Activated CD4-positive, alpha-beta T cell treated with anti-CD3 and anti-CD28 coated beads, Interleukin-2, amount 10 ng/mL, durations not matched to agents 24 days and 14 days (primary cell): ENCODE measurements at regions of chr1 and their contacts with region 1.

Region 1: GRCh38 chr1:59025898-59026426 is 242.1 kb upstream of the JUN start:
- DNase-seq: no peak
- H3K4me3 Mint-ChIP-seq: peak overlapping the region; percentile 75
- H3K27ac Mint-ChIP-seq: no peak overlapping the region
- H3K4me1 Mint-ChIP-seq: peaks cover 35% of the 10 kb centered on the region
- H3K27me3 Mint-ChIP-seq: no peaks in the 10 kb centered on the region

Region 2: GRCh38 chr1:58922302-58923089 is 103.5 kb before region 1 on chr1:
- intact Hi-C with region 1: loop called (anchors 5 kb)
- DNase-seq: peak; percentile 87
- H3K4me3 Mint-ChIP-seq: peak overlapping the region; percentile 23
- H3K27ac Mint-ChIP-seq: peak overlapping the region; percentile 70
- H3K4me1 Mint-ChIP-seq: peaks cover 29% of the 10 kb centered on the region
- H3K27me3 Mint-ChIP-seq: peaks cover under 1% of the 10 kb centered on the region

Region 3: GRCh38 chr1:59040486-59040885 is 14.5 kb after region 1 on chr1:
- intact Hi-C with region 1: loop called (anchors 1 kb)
- DNase-seq: no peak
- H3K4me3 Mint-ChIP-seq: no peak overlapping the region
- H3K27ac Mint-ChIP-seq: peak overlapping the region; percentile 21
- H3K4me1 Mint-ChIP-seq: peaks cover 30% of the 10 kb centered on the region
- H3K27me3 Mint-ChIP-seq: no peaks in the 10 kb centered on the region

Region 4: GRCh38 chr1:59046730-59047157 is 20.8 kb after region 1 on chr1:
- intact Hi-C with region 1: loop called (anchors 1 kb)
- DNase-seq: peak; percentile 89
- H3K4me3 Mint-ChIP-seq: peak overlapping the region; percentile 76
- H3K27ac Mint-ChIP-seq: peak overlapping the region; percentile 96
- H3K4me1 Mint-ChIP-seq: peaks cover 60% of the 10 kb centered on the region
- H3K27me3 Mint-ChIP-seq: no peaks in the 10 kb centered on the region

Region 5: GRCh38 chr1:59057211-59057694 is 31.3 kb after region 1 on chr1:
- intact Hi-C with region 1: no loop called
- DNase-seq: no peak
- H3K4me3 Mint-ChIP-seq: no peak overlapping the region
- H3K27ac Mint-ChIP-seq: no peak overlapping the region
- H3K4me1 Mint-ChIP-seq: peaks cover 18% of the 10 kb centered on the region
- H3K27me3 Mint-ChIP-seq: no peaks in the 10 kb centered on the region

Region 6: GRCh38 chr1:59083946-59084865 is 58.2 kb after region 1 on chr1:
- intact Hi-C with region 1: no loop called
- DNase-seq: no peak
- H3K4me3 Mint-ChIP-seq: no peak overlapping the region
- H3K27ac Mint-ChIP-seq: peak overlapping the region; percentile 39
- H3K4me1 Mint-ChIP-seq: peaks cover 22% of the 10 kb centered on the region
- H3K27me3 Mint-ChIP-seq: no peaks in the 10 kb centered on the region

Region 7: DNA sequence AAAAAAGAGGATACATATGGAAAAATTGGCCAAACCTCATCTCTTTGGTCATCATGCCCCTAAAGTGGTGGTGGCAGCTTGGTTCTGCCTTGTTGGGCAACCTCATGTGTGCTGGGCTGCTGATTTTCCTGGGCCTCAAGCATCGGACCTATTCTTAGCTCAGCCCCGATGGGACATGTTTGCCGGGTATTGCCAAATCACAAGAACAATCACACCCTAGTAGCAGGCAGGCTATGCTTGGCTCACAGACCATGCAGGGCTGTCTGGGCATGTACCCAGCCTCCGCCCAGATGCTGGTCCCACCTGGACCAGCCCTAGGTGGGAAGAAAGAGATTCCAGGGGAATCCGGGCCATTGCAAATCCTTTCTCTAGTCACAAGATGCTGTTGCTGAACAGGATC is 81.6 kb after region 1 on chr1:
- intact Hi-C with region 1: no loop called
- DNase-seq: no peak
- H3K4me3 Mint-ChIP-seq: no peak overlapping the region
- H3K27ac Mint-ChIP-seq: no peak overlapping the region
- H3K4me1 Mint-ChIP-seq: no peaks in the 10 kb centered on the region
- H3K27me3 Mint-ChIP-seq: no peaks in the 10 kb centered on the region

Region 8: DNA sequence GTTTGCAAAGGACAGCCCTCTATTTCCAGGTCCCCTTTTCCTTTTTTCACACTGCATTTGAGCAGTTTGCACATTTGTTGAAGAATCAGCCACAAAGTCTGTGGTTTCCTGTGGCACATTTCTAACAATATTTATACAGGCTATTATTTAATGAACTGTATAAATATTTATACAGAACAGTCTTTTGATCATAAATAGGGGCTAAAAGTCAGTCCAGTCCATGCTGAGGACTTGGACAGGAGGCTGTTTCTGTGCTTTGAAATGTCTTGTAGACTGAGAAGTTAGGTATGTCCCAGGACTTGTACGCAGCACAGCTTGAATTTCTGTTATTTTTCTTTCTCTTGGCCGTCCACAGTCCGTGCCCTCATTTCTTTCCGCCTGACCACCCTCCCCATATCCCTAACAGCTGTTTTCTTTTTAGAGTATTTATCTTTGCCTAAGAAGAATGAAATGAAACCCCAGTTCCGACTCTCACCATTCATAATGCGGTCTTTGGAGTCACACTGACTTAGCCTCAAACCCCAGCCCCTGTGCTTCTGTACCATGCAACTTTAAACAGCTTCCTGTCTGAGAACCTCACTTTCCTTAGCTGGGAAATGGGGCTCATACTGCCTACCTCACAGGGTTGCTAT is 290.7 kb after region 1 on chr1:
- intact Hi-C with region 1: no loop called
- DNase-seq: peak; percentile 55
- H3K4me3 Mint-ChIP-seq: no peak overlapping the region
- H3K27ac Mint-ChIP-seq: no peak overlapping the region
- H3K4me1 Mint-ChIP-seq: peaks cover 26% of the 10 kb centered on the region
- H3K27me3 Mint-ChIP-seq: no peaks in the 10 kb centered on the region